ENCODE measurements at regions of chr5 and their contacts with region 1.

Region 1: GRCh38 chr5:170444969-170445505 is 55.9 kb upstream of the KCNMB1 start:
- DNase-seq: no peak
- ATAC-seq: no peak
- H3K4me3 ChIP-seq: no peak overlapping the region
- H3K27ac ChIP-seq: no peak overlapping the region
- H3K4me1 ChIP-seq: no peaks in the 10 kb centered on the region
- H3K27me3 ChIP-seq: no peaks in the 10 kb centered on the region
- CTCF ChIP-seq: no peak

Region 2: GRCh38 chr5:170614720-170615119 is 169.7 kb after region 1 on chr5:
- intact Hi-C with region 1: loop called in 1 of 10 experiments (anchors 5 kb)
- DNase-seq: no peak
- ATAC-seq: no peak
- H3K4me3 ChIP-seq: no peak overlapping the region
- H3K27ac ChIP-seq: no peak overlapping the region
- H3K4me1 ChIP-seq: peaks cover 0 to 15% (median 5%) of the 10 kb centered on the region in 9 donors
- H3K27me3 ChIP-seq: no peaks in the 10 kb centered on the region
- CTCF ChIP-seq: no peak